Adrenal gland (tissue), 19 donors: ENCODE measurements at regions of chr2 and their contacts with region 1.

Region 1: DNA sequence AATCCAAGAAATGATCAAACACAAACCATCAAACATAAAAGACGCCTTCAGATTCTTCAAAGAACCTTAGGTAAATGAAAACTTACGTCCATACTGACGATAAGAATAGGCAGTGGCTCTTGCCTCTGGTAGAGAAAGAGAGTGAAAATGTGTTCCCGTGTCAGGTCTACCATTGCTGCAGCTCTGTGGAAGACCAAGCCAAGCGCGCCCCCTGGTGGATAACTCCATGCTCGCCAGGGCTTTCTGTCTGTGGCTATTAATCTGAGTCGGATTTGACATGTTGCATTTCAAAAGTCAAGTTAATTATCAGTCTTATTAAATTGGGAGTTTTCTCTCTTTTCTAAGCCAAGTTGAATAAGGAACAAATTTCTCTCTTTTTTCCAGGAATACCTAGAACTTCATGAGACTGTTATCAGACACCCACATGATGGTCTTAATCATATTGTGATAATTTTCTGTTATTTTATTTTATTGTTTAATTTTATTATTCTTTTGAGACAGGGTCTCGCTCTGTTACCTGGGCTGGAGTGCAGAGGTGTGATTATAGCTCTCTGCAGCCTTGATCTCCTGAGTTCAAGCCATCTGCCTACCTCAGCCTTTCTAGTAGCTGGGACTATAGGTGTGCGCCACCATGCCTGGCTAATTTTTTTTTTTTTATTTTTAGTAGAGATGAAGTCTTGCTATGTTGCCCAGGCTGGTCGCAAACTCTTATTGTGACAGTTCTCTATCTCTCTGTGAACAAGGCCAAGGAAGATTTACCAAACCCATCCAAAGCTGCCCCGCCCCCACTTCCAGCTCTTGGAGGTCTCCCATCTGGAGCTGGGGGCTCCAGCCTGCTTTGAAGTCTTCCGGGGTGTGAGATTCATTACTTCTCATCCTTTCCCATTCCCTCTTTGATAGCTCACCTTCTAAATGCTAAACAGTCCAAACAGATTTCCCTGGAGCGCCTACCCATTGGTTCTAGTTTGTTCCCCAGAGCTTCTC is 15.8 kb upstream of the ZAP70 start:
- DNase-seq: peak; percentile 84 to 97 (median 90)
- H3K4me3 ChIP-seq: peak overlapping the region in 1 of 4 donors; percentile 14
- H3K27ac ChIP-seq: no peak overlapping the region
- H3K4me1 ChIP-seq: no peaks in the 10 kb centered on the region
- H3K27me3 ChIP-seq: no peaks in the 10 kb centered on the region
- CTCF ChIP-seq: peak; percentile 94 to 99 (median 98)
- POLR2A ChIP-seq: no peak

Region 2: DNA sequence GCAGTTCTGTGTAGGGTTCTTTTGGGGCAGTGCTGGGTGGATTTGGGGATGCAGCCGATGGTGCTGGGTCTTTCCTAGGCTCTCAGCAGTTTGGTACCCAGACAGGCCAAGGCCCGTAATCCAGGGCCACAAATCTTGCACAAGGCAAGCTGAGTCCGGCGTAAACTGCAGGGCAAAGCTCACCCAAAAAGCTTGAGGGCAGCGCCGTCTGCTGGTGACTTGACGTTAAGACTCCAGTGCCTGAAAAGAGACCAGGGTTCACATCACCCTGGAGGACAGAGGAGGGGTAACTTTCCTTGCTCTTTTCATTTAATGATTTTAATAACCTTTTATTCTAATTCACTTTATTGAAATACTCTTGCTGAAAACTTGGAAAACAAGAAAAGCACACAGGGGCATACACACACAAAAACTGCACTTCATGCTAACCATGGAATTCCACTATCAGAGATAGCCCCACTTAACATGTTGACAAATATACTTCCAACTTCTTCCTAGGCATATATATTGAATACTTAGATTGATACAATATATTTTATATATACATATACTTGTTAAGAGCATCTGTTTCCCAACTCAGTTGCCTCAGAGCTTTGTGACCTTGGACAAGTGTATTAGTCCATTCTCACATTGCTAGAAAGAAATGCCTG is 687.6 kb after region 1 on chr2:
- intact Hi-C with region 1: loop called in 1 of 2 experiments (anchors 5 kb)
- DNase-seq: peak; percentile 75 to 89 (median 83)
- H3K4me3 ChIP-seq: no peak overlapping the region
- H3K27ac ChIP-seq: no peak overlapping the region
- H3K4me1 ChIP-seq: no peaks in the 10 kb centered on the region
- H3K27me3 ChIP-seq: no peaks in the 10 kb centered on the region
- CTCF ChIP-seq: peak; percentile 93 to 99 (median 99)
- POLR2A ChIP-seq: no peak